Calu3 (cell line): ENCODE measurements at regions of chr1 and their contacts with region 1.

Region 1: GRCh38 chr1:154404984-154405761 is at the start of gene IL6R:
- DNase-seq: peak; percentile 92
- H3K4me3 Mint-ChIP-seq: peak within 1 kb of the TSS; percentile 84
- H3K27ac Mint-ChIP-seq: peak within 1 kb of the TSS; percentile 83
- H3K4me1 Mint-ChIP-seq: peaks cover 29% of the 10 kb centered on the region
- H3K27me3 Mint-ChIP-seq: no peaks in the 10 kb centered on the region
- CTCF ChIP-seq: no peak
- total RNA-seq, gene IL6R: 5.0 and 8.3 TPM in 2 replicates

Region 2: GRCh38 chr1:154419620-154420571 is 14.7 kb after region 1 on chr1:
- CTCF ChIA-PET with region 1: interaction called, 15 read pairs
- intact Hi-C with region 1: no loop called
- DNase-seq: peak; percentile 81
- H3K4me3 Mint-ChIP-seq: peak overlapping the region; percentile 39
- H3K27ac Mint-ChIP-seq: peak overlapping the region; percentile 88
- H3K4me1 Mint-ChIP-seq: peaks cover 72% of the 10 kb centered on the region
- H3K27me3 Mint-ChIP-seq: no peaks in the 10 kb centered on the region
- CTCF ChIP-seq: no peak